Posterior cingulate gyrus (tissue), 11 donors: ENCODE measurements at regions of chr1 and their contacts with region 1.

Region 1: DNA sequence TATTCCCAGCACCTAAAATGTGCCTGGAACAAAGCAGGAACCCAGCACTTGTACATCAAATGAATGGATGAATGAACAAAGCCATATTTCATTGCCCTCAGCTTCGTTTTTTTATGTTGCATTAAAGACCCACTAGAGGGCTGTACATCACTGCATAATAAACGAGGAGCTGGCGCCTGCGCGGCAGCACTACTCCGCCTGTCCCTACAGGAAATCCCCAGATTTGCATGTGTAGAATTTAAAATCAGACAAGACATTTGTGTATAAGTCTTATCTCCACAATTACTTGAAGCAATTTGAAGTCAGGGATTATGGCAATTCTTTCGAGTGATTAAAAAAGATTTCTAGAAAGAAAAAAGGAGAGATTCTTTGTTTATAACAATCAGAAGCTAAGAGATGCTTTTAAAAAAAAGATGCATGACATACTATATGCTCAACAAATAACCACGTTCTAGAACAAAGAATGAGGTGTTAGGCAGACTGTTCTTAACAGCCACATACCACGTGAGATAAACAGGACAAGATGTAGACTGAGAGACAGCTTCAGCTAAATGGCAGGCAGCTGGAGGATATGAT is 5.4 kb upstream of the NEK2 start:
- DNase-seq: peak; percentile 59 to 98 (median 77)

Region 2: GRCh38 chr1:212035123-212035834 is 354.4 kb after region 1 on chr1 and contains the starts of genes DTL and INTS7:
- intact Hi-C with region 1: loop called (anchors 5 kb)
- DNase-seq: peak; percentile 96 to 100 (median 98)